Spleen (tissue), 13 donors: ENCODE measurements at regions of chr4 and their contacts with region 1.

Region 1: DNA sequence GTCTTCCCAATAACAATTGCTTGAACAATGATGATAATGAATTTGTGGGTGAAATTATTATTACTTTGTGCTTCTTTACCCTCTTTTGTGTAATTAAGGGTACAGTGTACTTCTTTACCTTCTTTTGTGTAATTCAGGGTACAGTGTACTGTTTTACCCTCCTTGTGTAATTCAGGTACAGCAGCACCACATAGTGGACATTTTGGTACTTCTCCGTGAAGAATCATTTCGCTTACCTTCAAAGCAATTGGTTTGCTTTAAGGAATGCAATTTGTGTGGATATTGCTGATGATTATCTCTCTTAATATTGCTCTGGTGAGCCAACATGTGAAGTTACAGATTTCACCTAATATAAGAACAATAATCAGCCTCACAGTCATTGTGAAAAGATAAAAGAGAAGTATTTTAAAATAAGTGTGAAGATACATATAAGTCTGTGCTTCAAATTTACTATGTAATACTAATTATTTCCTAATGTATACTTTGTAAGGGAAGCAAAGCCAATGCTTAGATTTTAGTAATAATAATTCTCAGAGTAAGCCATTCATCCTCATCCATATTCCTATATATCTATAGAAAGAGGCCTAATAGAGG is 27.2 kb upstream of the SEC24B start:
- DNase-seq: no peak
- H3K4me3 ChIP-seq: no peak overlapping the region
- H3K27ac ChIP-seq: no peak overlapping the region
- H3K4me1 ChIP-seq: no peaks in the 10 kb centered on the region
- H3K27me3 ChIP-seq: no peaks in the 10 kb centered on the region
- CTCF ChIP-seq: peak; percentile 20 to 70 (median 53)
- POLR2A ChIP-seq: no peak

Region 2: DNA sequence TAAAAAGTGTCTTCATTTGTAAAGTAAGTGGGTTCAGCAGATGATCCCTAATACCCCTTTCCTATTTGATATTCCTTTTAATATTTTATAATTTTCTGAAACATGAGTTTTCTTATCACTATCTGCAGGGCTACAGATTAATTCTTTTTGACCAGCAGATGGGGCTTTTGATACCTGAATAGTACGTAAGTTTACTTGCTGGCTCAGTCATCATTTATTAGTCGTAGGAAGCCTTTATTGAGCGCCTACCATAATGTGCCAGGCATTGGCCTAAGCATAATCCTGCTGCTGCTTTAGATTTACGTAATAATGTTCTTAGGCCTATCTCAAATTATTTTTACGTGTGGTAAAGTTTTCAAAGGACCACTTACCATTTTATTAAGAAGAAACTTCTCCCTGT is 723.0 kb before region 1 on chr4:
- intact Hi-C with region 1: loop called (anchors 10 kb)
- DNase-seq: no peak
- H3K4me3 ChIP-seq: no peak overlapping the region
- H3K27ac ChIP-seq: no peak overlapping the region
- H3K4me1 ChIP-seq: no peaks in the 10 kb centered on the region
- H3K27me3 ChIP-seq: no peaks in the 10 kb centered on the region
- CTCF ChIP-seq: peak in 4 of 11 experiments; percentile 16 to 37 (median 20)
- POLR2A ChIP-seq: no peak

Region 3: GRCh38 chr4:108834835-108835384 is 571.5 kb before region 1 on chr4:
- intact Hi-C with region 1: loop called (anchors 5 kb)
- DNase-seq: no peak
- H3K4me3 ChIP-seq: no peak overlapping the region
- H3K27ac ChIP-seq: no peak overlapping the region
- H3K4me1 ChIP-seq: peaks cover 0 to 4% (median 0%) of the 10 kb centered on the region in 6 donors
- H3K27me3 ChIP-seq: peaks cover 0 to 4% (median 0%) of the 10 kb centered on the region in 7 donors
- CTCF ChIP-seq: peak in 9 of 11 experiments; percentile 11 to 61 (median 45)
- POLR2A ChIP-seq: no peak

Region 4: GRCh38 chr4:109631532-109632108 is 225.2 kb after region 1 on chr4:
- intact Hi-C with region 1: no loop called
- DNase-seq: no peak
- H3K4me3 ChIP-seq: no peak overlapping the region
- H3K27ac ChIP-seq: no peak overlapping the region
- H3K4me1 ChIP-seq: peaks cover 0 to 18% (median 6%) of the 10 kb centered on the region in 6 donors
- H3K27me3 ChIP-seq: no peaks in the 10 kb centered on the region
- CTCF ChIP-seq: no peak
- POLR2A ChIP-seq: no peak

Region 5: DNA sequence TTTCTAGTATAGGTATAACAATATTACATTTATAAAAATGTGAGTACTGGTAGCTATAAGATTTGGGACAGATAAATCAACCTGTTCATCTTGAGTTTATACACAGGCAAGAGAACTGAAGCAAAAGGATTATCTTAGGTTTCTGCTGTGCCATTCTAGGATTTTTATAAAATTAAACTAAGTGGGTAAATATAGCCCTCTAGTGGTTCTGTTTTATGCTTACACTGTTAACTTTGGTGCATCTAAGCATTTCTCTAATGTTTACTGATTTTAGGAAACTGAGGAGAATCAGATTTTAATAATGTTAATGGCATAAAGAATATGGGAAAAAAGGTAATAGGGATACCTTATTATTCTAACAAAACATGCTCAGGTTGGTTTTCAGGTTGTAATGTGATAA is 420.3 kb after region 1 on chr4:
- intact Hi-C with region 1: no loop called
- DNase-seq: no peak
- H3K4me3 ChIP-seq: no peak overlapping the region
- H3K27ac ChIP-seq: no peak overlapping the region
- H3K4me1 ChIP-seq: no peaks in the 10 kb centered on the region
- H3K27me3 ChIP-seq: no peaks in the 10 kb centered on the region
- CTCF ChIP-seq: peak; percentile 12 to 65 (median 46)
- POLR2A ChIP-seq: no peak